ENCODE measurements at regions of chr6 and their contacts with region 1.

Region 1: GRCh38 chr6:83067448-83068413 is at the start of gene DOP1A:
- DNase-seq: peak; percentile 89 to 97 (median 90)
- ATAC-seq: peak; percentile 93
- H3K4me3 ChIP-seq: peak within 1 kb of the TSS; percentile 85
- H3K27ac ChIP-seq: peak within 1 kb of the TSS; percentile 43; the same call in 1 of the 3 replicates
- H3K4me1 ChIP-seq: peaks cover 15 to 21% of the 10 kb centered on the region in 2 experiments; a peak in 3 of 5 replicates
- H3K27me3 ChIP-seq: no peaks in the 10 kb centered on the region
- CTCF ChIP-seq: peak; percentile 94 to 98 (median 95)
- EP300 ChIP-seq: peak; percentile 26; the same call in 1 of the 2 replicates
- POLR2A ChIP-seq: peak; percentile 47; the same call in 1 of the 2 replicates
- RAD21 ChIP-seq: peak; percentile 95 to 96
- polyA plus RNA-seq, gene DOP1A: 0.75 to 1.3 TPM

Region 2: DNA sequence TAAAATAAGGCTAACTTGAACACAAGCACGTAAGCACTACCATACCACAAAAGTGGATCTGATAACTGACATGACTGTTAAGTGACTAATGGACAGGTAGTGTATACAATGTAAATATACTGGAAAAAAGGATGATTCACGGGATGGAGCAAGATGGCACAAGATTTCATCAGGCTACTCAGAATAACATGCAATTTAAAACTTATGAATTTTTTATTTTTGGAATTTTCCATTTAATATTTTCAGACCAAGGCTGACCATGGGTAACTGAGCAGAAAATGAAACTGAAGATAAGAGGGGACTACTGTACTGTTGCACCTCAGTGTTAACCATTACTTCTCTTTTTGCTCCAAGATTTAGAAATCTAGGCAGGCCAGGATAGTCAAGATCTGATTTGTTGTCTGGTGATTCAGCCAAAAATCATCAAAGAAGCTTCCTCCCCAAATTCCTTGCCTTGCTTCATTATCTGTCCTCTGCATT is 658.7 kb before region 1 on chr6:
- CTCF ChIA-PET with region 1: no interaction called
- POLR2A ChIA-PET with region 1: no interaction called
- in situ Hi-C with region 1: no loop called
- intact Hi-C with region 1: no loop called
- DNase-seq: no peak
- ATAC-seq: no peak
- H3K4me3 ChIP-seq: no peak overlapping the region
- H3K27ac ChIP-seq: no peak overlapping the region
- H3K4me1 ChIP-seq: no peaks in the 10 kb centered on the region
- H3K27me3 ChIP-seq: no peaks in the 10 kb centered on the region
- CTCF ChIP-seq: no peak
- EP300 ChIP-seq: no peak
- POLR2A ChIP-seq: no peak
- RAD21 ChIP-seq: no peak

Region 3: GRCh38 chr6:82589509-82590206 is 478.1 kb before region 1 on chr6:
- CTCF ChIA-PET with region 1: no interaction called
- POLR2A ChIA-PET with region 1: no interaction called
- in situ Hi-C with region 1: loop called (anchors 25 kb)
- intact Hi-C with region 1: no loop called
- DNase-seq: peak in 2 of 4 experiments; percentile 8 to 10
- ATAC-seq: peak; percentile 66
- H3K4me3 ChIP-seq: no peak overlapping the region
- H3K27ac ChIP-seq: no peak overlapping the region
- H3K4me1 ChIP-seq: no peaks in the 10 kb centered on the region
- H3K27me3 ChIP-seq: no peaks in the 10 kb centered on the region
- CTCF ChIP-seq: peak in 1 of 3 experiments; percentile 46; a peak in 2 of 6 replicates
- EP300 ChIP-seq: no peak
- POLR2A ChIP-seq: no peak
- RAD21 ChIP-seq: peak; percentile 61 to 77

Region 4: DNA sequence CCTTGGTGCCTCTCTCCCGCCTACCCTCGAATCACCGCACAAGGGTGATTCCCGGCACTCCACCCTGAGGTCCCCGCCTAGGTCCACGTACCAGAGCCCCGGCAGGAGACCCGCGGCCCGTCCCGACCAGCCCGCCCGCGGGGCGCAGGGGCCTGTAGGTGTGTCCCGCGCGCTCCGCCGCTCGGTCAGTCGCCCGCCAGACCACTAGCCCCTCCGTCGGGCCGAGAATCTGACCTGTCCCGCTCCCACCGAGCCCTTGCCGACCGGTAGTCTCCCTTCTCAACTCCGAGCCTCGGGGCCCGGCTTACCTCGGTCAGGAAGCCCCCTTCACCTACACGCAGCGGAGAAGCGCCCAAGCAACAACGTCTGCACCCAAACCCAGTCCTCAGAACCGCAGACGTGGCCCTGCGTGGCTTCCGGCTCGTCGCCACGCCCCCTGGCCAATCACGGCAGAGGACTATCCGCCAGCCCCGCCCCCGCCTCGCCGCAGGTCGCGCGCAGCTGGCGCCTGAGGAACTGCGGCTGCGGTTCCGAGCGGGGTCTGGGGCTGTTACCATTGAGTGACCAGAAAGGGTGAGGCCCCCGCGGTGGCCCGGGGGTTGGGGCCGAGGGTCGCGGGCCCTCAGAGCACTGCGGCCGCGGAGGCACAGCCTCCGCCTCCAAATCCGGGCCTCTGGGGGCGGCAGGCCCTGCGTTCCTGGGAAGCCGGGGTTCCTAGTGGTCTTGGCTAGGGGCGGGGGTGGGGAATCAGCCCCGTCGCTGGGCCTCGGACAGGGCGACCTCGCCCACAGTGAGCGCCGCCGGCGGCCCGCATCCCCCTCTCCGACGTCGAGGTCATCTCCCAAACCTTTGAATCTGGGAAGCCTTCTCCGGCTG is 125.4 kb after region 1 on chr6 and contains the starts of genes PGM3 and RWDD2A:
- CTCF ChIA-PET with region 1: no interaction called
- POLR2A ChIA-PET with region 1: interaction called, 3 read pairs
- in situ Hi-C with region 1: no loop called
- intact Hi-C with region 1: loop called (anchors 2 kb)
- DNase-seq: peak; percentile 94 to 96 (median 96)
- ATAC-seq: peak; percentile 98
- H3K4me3 ChIP-seq: peak within 1 kb of the TSS; percentile 97
- H3K27ac ChIP-seq: peak within 1 kb of the TSS; percentile 87
- H3K4me1 ChIP-seq: peaks cover 6 to 14% of the 10 kb centered on the region in 2 experiments; a peak in 4 of 5 replicates
- H3K27me3 ChIP-seq: no peaks in the 10 kb centered on the region
- CTCF ChIP-seq: no peak
- EP300 ChIP-seq: no peak
- POLR2A ChIP-seq: peak; percentile 93
- RAD21 ChIP-seq: no peak
- polyA plus RNA-seq, gene PGM3: 75.3 to 107 TPM
- polyA plus RNA-seq, gene RWDD2A: 2.5 to 3.6 TPM

Region 5: GRCh38 chr6:83215131-83216047 is 147.7 kb after region 1 on chr6:
- CTCF ChIA-PET with region 1: interaction called, 37 read pairs
- POLR2A ChIA-PET with region 1: interaction called, 3 read pairs
- in situ Hi-C with region 1: loop called (anchors 5 kb)
- intact Hi-C with region 1: loop called (anchors 1 kb)
- DNase-seq: peak; percentile 41 to 77 (median 44)
- ATAC-seq: peak; percentile 99
- H3K4me3 ChIP-seq: no peak overlapping the region
- H3K27ac ChIP-seq: no peak overlapping the region
- H3K4me1 ChIP-seq: no peaks in the 10 kb centered on the region
- H3K27me3 ChIP-seq: no peaks in the 10 kb centered on the region
- CTCF ChIP-seq: peak; percentile 84 to 91 (median 90)
- EP300 ChIP-seq: no peak
- POLR2A ChIP-seq: no peak
- RAD21 ChIP-seq: peak; percentile 86 to 91

Region 6: DNA sequence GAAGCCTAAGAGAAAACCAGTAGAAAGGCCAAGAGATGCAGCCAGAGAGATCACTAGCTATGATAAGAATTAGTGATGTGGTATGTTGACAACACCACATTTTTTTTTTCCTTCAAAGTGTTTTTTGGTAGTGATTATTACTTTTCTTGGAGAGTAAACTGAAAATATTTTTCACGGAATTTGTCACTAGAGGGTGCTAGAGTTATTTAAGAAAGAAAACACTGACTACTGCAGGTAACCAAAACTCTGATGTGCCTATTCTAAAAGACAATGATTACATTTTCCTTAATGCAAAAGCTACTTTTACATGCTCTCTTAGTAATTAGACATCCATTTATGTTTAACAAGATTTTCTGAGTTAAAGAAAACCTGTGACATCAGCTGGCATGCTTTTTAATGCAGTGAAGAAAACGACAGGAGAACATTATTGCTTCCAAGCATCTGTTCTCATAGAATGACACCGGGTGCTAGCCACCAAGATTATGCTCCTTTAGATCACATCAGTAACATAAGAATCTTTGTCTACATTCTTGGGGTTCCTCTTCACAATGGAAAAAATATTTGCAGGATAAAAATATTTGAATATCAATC is 154.3 kb after region 1 on chr6:
- CTCF ChIA-PET with region 1: no interaction called
- POLR2A ChIA-PET with region 1: interaction called, 3 read pairs
- in situ Hi-C with region 1: loop called (anchors 5 kb)
- intact Hi-C with region 1: no loop called
- DNase-seq: peak in 2 of 4 experiments; percentile 21 to 48
- ATAC-seq: peak; percentile 64; the same call in 2 of the 3 replicates
- H3K4me3 ChIP-seq: no peak overlapping the region
- H3K27ac ChIP-seq: no peak overlapping the region
- H3K4me1 ChIP-seq: no peaks in the 10 kb centered on the region
- H3K27me3 ChIP-seq: no peaks in the 10 kb centered on the region
- CTCF ChIP-seq: peak; percentile 33 to 75 (median 45); a peak in 3 of 6 replicates
- EP300 ChIP-seq: no peak
- POLR2A ChIP-seq: no peak
- RAD21 ChIP-seq: peak; percentile 82 to 84

Region 7: GRCh38 chr6:83417880-83418663 is 350.3 kb after region 1 on chr6:
- CTCF ChIA-PET with region 1: no interaction called
- POLR2A ChIA-PET with region 1: no interaction called
- in situ Hi-C with region 1: no loop called
- intact Hi-C with region 1: loop called (anchors 10 kb)
- DNase-seq: peak; percentile 18 to 67 (median 32)
- ATAC-seq: peak; percentile 93
- H3K4me3 ChIP-seq: no peak overlapping the region
- H3K27ac ChIP-seq: no peak overlapping the region
- H3K4me1 ChIP-seq: peaks cover 0 to 4% of the 10 kb centered on the region in 2 experiments; a peak in 1 of 5 replicates
- H3K27me3 ChIP-seq: no peaks in the 10 kb centered on the region
- CTCF ChIP-seq: peak; percentile 55 to 80 (median 55); a peak in 4 of 6 replicates
- EP300 ChIP-seq: no peak
- POLR2A ChIP-seq: no peak
- RAD21 ChIP-seq: peak; percentile 75 to 94

Region 8: DNA sequence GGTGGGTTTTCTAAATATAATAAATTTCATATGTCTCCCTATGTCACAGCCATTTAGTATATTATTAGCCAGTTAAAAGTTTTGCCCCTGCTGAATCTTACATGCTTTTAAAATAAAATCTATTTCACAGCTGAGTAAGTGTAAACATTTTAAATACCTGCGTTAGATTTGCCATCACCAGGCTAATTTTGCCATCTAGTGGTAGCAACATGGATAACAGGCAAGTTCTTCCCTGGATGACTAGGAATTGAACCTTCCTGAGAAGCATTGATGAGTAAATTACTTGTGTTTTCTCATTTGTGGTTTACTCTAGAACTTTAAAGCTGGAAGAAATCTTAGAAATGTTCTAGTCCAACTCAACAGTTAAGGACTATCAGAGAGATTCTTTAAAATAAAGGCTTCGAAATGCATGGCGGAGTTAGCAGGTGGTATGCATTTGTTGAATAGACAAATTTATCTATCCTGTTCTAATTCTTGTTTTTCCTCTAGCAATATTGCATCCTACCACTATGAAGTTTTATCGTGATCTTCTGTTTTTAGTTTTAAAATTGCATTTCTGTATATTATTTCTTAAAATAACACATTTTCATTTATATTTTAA is 447.2 kb after region 1 on chr6:
- CTCF ChIA-PET with region 1: interaction called, 12 read pairs
- POLR2A ChIA-PET with region 1: no interaction called
- in situ Hi-C with region 1: loop called (anchors 5 kb)
- intact Hi-C with region 1: loop called (anchors 1 kb)
- DNase-seq: peak; percentile 34 to 67 (median 50)
- ATAC-seq: peak; percentile 56; the same call in 1 of the 3 replicates
- H3K4me3 ChIP-seq: no peak overlapping the region
- H3K27ac ChIP-seq: no peak overlapping the region
- H3K4me1 ChIP-seq: peaks cover 0 to 9% of the 10 kb centered on the region in 2 experiments; a peak in 3 of 5 replicates
- H3K27me3 ChIP-seq: peaks cover 0 to 7% of the 10 kb centered on the region in 2 experiments; a peak in 2 of 5 replicates
- CTCF ChIP-seq: peak; percentile 70 to 86 (median 75); a peak in 5 of 6 replicates
- EP300 ChIP-seq: no peak
- POLR2A ChIP-seq: no peak
- RAD21 ChIP-seq: peak; percentile 90 to 95

Measured in K562 (cell line).